ENCODE measurements at regions of chr1 and their contacts with region 1.

Region 1: DNA sequence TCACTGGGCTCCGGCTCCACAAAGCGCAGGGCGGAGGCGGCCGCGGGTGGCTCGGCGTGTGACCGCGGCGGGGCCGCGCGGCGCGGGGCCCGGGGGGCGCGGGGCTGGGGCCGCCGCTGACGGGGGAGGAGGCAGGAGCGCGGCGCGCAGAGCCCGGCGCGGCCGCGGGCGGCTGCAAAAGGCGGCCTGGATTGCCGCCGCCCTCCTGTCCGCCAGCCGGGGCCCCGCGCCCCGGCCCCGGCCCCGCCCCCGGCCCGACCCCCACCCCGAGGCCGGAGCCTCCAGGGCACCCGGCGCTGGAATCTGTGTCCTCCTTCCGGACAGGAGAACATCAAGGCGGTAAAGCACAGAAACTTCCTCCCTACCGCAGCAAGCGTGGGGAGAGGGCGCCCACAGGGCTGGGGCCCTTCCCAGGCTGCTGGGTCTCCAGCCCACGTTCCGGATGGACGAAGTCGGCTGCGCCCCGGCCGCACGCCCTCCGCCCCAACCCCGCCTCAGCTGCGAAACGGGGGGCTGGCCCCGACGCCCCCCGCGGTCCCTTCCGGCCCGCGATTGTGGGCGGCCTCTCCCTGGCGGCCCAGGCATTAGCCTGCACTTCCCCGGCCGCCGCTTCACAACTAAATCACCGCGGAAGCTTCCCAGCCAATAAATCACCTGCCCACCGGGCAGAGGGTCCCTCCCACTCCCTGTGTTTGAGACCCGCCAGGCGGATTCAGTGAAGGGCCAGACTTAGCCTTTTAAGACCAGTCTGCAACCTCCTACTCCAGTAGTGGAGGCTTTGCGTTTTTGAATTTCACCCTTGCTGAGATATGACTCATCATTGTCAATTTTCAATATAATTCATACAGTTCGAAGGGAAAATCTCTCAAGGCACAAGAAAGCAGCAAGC is 106.0 kb downstream of the SLC45A1 start:
- DNase-seq: peak in 5 of 10 donors; percentile 23 to 87 (median 37)

Region 2: DNA sequence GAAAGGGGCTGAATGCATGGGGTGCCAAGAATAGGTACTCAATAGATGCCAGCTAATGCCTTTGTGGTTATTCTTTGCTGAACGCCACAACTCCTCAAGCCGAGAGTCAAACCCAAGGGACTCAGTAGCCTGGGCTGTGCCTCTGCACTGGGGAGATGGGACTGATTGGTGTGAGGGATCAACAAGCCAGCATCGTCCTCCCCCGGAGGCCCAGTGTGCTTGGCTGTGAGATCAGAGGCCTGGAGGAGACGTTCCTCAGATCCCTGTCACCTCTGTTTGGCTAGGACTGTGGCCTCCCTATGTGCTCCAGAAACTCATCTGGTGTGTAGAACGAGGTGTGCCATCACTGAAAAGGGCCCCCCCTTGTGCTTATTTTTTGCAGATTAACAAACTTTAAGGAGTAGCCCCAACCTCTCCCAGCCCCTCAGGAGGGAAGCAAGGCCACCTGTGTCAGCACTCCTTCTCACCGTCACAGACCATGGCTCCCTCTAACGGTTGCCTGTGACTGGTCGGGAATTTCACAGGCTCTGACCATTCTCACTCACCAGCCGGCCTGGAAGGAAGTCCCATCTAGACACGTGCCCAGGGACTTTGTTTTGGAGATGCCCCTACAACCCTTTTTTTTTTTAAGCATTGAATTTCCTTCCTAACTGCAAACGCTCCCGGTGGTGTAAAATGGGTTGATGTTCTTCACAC is 846.8 kb before region 1 on chr1:
- intact Hi-C with region 1: no loop called
- DNase-seq: peak in 3 of 10 donors; percentile 36 to 57 (median 57)

Region 3: DNA sequence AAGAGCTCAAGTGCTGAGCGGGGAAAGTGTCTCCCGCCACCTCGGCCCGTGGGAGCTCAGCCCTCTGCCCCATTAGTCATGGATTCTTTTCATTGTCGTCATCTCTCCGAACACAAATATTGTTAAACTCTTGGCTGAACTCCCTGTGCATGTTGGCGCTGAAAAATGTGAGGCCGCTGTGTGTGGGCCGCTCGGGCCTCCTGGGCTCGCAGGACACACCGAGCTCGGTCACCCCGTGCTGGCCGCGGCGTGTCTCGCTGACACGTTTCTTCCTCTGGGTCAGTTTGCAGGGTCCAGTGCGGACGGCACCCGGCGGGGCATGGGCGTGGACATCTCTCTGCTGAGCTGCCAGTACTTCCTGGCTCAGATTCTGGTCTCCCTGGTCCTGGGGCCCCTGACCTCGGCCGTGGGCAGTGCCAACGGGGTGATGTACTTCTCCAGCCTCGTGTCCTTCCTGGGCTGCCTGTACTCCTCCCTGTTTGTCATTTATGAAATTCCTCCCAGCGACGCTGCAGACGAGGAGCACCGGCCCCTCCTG is 80.4 kb before region 1 on chr1:
- intact Hi-C with region 1: no loop called
- DNase-seq: peak in 3 of 10 donors; percentile 74 to 83 (median 81)

Region 4: GRCh38 chr1:8374812-8375211 is 49.1 kb before region 1 on chr1:
- intact Hi-C with region 1: loop called (anchors 5 kb)
- DNase-seq: no peak

Region 5: GRCh38 chr1:8554956-8555534 is 131.2 kb after region 1 on chr1:
- intact Hi-C with region 1: no loop called
- DNase-seq: peak in 1 of 10 donors; percentile 32

Region 6: DNA sequence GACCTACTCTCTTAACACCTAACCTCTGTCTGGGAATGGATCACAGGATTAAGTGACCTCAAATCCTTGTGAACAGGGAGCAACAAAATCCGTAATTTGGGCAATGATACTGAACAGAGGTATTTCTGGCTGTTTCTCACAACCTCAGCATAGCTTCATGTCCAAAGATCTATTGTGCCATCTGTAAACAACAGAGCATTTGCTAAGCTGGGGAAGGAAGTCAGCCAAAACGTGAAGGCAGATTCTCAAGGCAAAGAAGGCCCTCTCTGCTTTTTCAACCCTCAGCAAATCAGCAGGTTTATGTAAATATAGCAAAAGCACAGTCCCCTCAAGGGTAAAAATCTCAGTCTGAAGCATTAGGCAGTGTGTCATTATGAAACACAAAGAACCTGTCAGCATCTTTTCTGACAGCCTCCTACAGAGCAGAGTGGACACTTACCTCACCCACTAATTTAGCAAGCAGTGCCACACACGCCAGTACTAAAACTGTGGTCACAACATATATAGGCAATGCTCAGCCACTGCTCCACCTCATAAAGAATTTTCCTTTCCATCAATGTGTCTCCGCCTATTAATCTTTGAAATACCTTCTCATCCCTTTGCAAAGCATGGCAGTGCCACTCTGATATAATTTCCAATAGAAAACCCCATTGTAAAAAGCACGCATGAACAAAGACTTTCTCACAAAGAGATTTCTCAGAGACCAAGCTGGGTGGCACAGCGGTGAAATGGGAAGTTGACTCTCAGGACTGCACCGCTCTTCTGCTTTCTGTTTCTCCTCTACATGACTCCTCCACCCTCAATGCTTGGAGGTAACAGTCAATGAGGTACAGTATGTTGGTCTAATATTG is 205.6 kb after region 1 on chr1:
- intact Hi-C with region 1: no loop called
- DNase-seq: peak in 2 of 10 donors; percentile 14 to 34